Activated naive CD4-positive, alpha-beta T cell treated with anti-CD3 and anti-CD28 coated beads, Interleukin-2, amount 10 ng/mL, durations not matched to agents 7 days and 5 days (primary cell): ENCODE measurements at regions of chr1 and their contacts with region 1.

Region 1: DNA sequence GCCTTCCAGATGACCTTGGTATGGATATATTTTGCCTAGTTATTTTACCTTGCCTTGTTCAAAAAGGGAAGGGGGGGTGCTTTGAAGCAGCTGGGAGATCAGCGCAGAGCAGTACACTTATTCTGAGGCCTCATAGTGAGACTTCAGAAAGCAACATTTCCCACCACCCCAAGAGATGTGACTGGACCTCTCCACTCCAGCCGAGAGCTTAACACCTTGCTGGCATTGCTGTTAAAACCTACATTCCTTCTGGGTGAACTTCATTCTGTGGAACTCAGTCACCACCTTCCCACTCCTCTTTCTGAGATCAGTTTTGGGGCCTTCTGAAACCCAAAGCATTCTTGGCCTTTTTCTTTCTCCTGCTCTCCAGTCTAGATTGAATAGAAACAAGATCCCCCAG is 148.7 kb downstream of the BARHL2 start:
- DNase-seq: no peak
- H3K4me3 Mint-ChIP-seq: no peak overlapping the region
- H3K27ac Mint-ChIP-seq: no peak overlapping the region
- H3K4me1 Mint-ChIP-seq: no peaks in the 10 kb centered on the region
- H3K27me3 Mint-ChIP-seq: peaks cover 4% of the 10 kb centered on the region

Region 2: DNA sequence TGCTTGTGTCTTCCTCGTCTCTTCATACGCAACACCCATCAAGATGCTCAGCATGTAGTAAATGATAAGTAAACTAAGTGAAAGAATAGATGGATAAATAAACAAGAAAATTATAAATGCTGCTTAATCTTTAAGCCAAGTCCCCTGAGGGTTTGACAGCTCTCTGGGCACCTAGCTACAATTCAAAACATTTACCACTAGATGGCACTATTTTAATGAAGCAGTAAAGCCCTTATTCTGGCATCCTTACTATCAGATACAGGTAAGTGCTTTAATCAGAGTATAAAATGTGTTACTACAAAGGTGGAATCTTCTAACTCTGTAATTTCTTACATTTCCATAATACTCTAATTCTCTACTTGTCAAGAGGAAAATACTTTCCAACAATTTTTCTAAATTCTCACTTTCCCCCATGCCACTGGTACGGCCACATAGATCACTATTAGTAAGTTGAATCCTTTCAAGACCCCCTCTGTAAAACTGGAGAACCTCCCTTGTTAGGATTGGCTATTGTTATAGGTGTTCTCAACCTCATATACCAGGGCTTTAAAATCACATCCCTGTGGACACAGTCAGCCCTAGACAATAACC is 10.9 kb after region 1 on chr1:
- CTCF ChIA-PET with region 1: interaction called, 12 read pairs
- DNase-seq: no peak
- H3K4me3 Mint-ChIP-seq: no peak overlapping the region
- H3K27ac Mint-ChIP-seq: no peak overlapping the region
- H3K4me1 Mint-ChIP-seq: no peaks in the 10 kb centered on the region
- H3K27me3 Mint-ChIP-seq: no peaks in the 10 kb centered on the region